Right lobe of liver (tissue), 6 donors: ENCODE measurements at regions of chr20 and their contacts with region 1.

Region 1: DNA sequence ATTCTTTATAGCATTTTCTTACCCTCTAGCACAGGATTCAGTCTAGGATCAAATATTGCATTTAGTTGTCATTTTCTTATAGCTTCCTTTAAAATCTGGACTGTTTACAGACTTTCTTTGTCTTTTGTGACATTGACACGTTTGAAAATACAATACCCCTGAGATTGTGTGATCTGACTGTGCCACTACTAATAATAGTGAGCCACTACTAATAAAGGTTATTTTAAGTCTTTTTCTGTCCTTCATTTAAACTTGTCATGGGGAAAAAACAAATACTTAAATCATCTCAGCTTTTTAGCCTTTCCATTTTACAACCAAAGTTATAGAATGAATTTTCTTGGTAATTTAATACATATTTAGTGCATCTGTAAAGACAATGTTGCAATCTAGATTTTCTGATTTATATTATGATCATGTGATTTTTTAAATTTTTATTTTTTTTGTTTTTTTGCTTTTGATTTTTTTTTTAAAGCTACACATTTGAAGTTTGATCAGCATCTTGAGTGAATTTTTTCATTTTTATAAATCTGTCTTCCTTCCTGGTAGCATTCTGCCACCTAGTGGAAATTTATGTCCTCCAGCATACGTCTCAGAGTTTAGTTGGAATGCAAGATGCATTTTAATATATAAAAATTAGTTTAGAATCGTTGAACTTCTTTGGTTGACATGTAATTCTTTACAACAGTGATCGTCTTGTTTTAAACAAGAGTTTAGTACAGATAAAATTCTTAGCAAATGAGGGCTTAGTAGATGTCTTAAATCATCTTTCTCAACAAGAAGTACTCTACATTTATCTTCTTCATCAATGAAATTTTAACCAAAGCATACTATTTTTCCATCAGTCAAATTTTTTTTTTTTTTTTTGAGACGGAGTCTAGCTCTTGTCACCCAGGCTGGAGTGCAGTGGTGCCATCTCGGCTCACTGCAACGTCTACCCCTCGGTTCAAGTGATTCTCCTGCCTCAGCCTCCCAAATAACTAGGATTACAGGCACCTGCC is 119.4 kb downstream of the NCOA3 start:
- DNase-seq: no peak
- ATAC-seq: peak; percentile 34 to 56 (median 48)
- H3K4me3 ChIP-seq: no peak overlapping the region
- H3K27ac ChIP-seq: no peak overlapping the region
- H3K4me1 ChIP-seq: no peaks in the 10 kb centered on the region
- H3K27me3 ChIP-seq: no peaks in the 10 kb centered on the region
- CTCF ChIP-seq: peak; percentile 76 to 88 (median 86)
- POLR2A ChIP-seq: no peak

Region 2: DNA sequence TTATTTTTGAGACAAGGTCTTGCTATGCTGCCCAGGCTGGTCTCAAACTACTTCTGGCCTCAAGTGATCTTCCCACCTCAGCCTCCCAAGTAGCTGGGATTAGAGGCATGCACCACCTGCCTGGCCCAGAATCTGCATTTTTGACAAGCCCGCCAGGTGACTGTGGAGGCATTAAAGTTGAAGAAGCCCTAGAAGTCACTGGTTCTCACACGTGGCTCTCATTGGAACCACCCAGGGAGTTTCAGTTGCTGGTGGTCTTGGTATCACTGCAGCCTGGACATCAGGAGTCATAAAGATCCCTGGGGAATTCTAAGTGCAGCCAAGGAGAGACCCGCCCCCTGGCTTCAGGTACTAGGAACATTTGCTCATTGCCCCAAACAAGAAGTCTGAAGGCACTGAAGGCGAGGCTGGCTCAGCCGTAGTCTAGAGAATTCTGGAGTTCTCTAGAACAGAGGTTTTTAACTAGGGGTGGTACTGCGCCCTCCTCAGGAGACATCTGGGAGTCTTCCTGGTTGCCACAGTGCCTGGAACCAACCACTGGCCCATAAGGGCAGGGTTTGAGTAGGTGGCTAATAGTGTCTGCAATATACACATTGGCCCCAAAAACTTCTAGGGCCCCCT is 447.4 kb before region 1 on chr20:
- intact Hi-C with region 1: loop called in 1 of 2 experiments (anchors 10 kb)
- DNase-seq: no peak
- ATAC-seq: no peak
- H3K4me3 ChIP-seq: no peak overlapping the region
- H3K27ac ChIP-seq: no peak overlapping the region
- H3K4me1 ChIP-seq: no peaks in the 10 kb centered on the region
- H3K27me3 ChIP-seq: no peaks in the 10 kb centered on the region
- CTCF ChIP-seq: no peak
- POLR2A ChIP-seq: no peak

Region 3: GRCh38 chr20:47749339-47749738 is 128.2 kb after region 1 on chr20:
- intact Hi-C with region 1: no loop called
- DNase-seq: no peak
- ATAC-seq: peak in 1 of 4 donors; percentile 33
- H3K4me3 ChIP-seq: no peak overlapping the region
- H3K27ac ChIP-seq: no peak overlapping the region
- H3K4me1 ChIP-seq: no peaks in the 10 kb centered on the region
- H3K27me3 ChIP-seq: no peaks in the 10 kb centered on the region
- CTCF ChIP-seq: no peak
- POLR2A ChIP-seq: no peak